Spleen (tissue), 13 donors: ENCODE measurements at regions of chr14 and their contacts with region 1.

Region 1: GRCh38 chr14:63952933-63953437 is 100.2 kb downstream of the SYNE2 start:
- DNase-seq: no peak
- H3K4me3 ChIP-seq: no peak overlapping the region
- H3K27ac ChIP-seq: peak overlapping the region in 7 of 8 donors; percentile 6 to 62 (median 39)
- H3K4me1 ChIP-seq: peaks cover 0 to 23% (median 8%) of the 10 kb centered on the region in 6 donors
- H3K27me3 ChIP-seq: no peaks in the 10 kb centered on the region
- CTCF ChIP-seq: no peak
- POLR2A ChIP-seq: no peak

Region 2: DNA sequence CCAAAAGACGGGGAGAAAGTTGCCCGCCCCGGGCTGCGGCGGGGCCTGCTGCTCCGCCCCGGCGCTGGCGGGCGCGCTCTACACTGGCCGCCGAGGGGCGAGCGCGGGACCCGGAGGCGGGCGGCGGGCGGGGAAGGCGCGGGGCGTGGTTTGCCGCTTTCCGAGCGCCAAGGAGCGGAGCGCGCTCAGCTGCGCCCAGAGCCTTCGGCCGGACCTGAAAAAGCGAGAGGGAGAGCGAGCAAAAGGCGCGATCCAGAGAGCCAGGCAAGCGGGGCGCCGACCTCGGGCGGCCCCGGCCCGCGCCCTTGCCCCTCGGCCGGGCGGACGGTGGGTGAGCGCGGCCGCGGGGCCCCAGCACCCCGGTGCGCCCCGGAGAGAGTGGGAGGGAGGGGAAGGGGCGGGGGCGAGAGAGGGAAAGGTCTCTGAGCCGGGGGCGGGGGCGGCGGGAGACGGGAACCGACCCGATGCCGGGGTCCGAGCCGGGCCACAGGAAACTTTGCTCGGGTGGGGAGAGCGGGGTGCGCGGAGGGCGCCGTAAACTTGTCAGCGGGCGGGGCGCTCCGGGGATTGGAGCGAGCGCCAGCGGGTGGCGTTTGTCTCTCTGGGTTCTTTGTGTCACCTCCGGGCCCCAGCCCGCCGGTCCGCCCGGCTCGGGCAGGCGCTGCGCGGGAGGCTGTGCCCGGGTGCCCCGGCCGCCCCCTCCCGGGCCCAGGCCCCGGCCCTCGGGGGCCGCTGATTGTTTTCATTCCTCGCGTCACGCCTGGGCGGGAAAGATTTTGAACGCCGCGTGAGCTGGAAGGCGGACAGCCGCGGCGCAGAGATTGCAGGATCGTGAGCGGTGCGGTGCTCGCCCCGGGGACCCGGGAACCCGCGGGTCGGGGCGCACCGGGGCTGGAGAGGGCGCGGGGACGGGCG is 99.9 kb before region 1 on chr14 and contains the start of gene SYNE2:
- intact Hi-C with region 1: loop called (anchors 10 kb)
- DNase-seq: peak; percentile 94
- H3K4me3 ChIP-seq: peak within 1 kb of the TSS; percentile 59 to 92 (median 76)
- H3K27ac ChIP-seq: peak within 1 kb of the TSS; percentile 73 to 96 (median 92)
- H3K4me1 ChIP-seq: peaks cover 4 to 52% (median 35%) of the 10 kb centered on the region in 6 donors
- H3K27me3 ChIP-seq: peaks cover 0 to 27% (median 0%) of the 10 kb centered on the region in 7 donors
- CTCF ChIP-seq: peak in 8 of 11 experiments; percentile 11 to 73 (median 47)
- POLR2A ChIP-seq: peak in 1 of 3 donors; percentile 27
- total RNA-seq, gene SYNE2: 128 to 173 (median 154) TPM

Region 3: GRCh38 chr14:64491637-64492036 is 538.7 kb after region 1 on chr14:
- intact Hi-C with region 1: no loop called
- DNase-seq: no peak
- H3K4me3 ChIP-seq: no peak overlapping the region
- H3K27ac ChIP-seq: no peak overlapping the region
- H3K4me1 ChIP-seq: peaks cover 0 to 28% (median under 1%) of the 10 kb centered on the region in 6 donors
- H3K27me3 ChIP-seq: no peaks in the 10 kb centered on the region
- CTCF ChIP-seq: no peak
- POLR2A ChIP-seq: no peak